ENCODE measurements at regions of chr1 and their contacts with region 1.

Region 1: DNA sequence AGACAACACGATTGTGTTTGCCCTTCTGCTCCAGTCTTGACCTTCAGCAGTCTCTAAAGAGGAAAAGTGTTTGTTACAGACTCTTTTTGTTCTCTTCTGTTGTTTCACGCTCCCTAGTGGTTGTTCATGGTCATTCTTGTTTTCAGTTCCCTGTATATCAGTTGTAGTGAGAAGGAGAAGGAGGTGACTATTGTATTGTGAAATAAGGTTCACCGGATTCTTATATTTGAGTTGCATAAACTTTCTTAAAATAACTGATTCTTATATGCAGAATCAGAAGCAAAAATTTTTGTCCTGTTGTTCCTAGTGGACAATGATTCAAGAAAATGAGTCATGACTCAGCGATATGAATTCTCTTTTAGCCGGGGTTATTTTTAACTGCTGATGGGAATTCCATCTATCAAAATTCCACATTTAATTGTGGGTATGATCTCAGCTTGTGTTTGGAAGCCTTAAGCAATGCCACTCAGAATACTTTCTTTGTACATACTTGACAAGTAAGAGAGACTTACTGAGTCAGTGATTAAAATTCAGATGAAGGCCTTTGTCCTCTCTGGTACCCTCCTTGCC is 152.2 kb downstream of the CLEC20A start:
- DNase-seq: no peak
- ATAC-seq: peak; percentile 74 to 76
- H3K4me3 ChIP-seq: peak overlapping the region in 2 of 4 donors; percentile 16 to 19
- H3K27ac ChIP-seq: peak overlapping the region; percentile 76 to 84 (median 82)
- H3K4me1 ChIP-seq: peaks cover 56 to 60% of the 10 kb centered on the region in 2 donors
- H3K27me3 ChIP-seq: no peaks in the 10 kb centered on the region
- CTCF ChIP-seq: peak; percentile 45 to 82 (median 57)
- POLR2A ChIP-seq: no peak

Region 2: DNA sequence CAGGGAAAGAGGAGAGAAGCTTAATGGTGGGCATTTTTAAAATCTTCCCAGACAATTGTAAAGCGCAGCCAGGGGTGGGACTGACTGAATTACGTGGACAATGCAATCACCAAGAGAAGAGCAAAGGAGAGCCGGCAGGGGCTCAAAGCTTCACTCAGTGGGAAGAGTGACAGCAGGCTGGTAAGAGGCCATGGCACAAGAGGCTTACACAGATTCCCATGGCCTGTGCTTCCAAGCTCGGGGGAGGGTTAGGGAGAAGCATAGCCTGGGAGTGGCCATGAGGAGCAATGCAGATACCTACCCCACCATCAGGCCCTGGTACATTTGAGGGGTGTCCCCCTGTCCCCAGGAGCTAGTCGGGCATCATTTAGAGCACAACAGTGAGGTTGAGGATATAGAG is 347.6 kb before region 1 on chr1:
- in situ Hi-C with region 1: no loop called
- intact Hi-C with region 1: no loop called
- DNase-seq: no peak
- ATAC-seq: peak in 1 of 2 donors; percentile 16
- H3K4me3 ChIP-seq: no peak overlapping the region
- H3K27ac ChIP-seq: peak overlapping the region; percentile 83 to 90 (median 86)
- H3K4me1 ChIP-seq: peaks cover 47 to 54% of the 10 kb centered on the region in 2 donors
- H3K27me3 ChIP-seq: no peaks in the 10 kb centered on the region
- CTCF ChIP-seq: no peak
- POLR2A ChIP-seq: no peak

Region 3: GRCh38 chr1:178161516-178161915 is 183.1 kb before region 1 on chr1:
- in situ Hi-C with region 1: no loop called
- intact Hi-C with region 1: no loop called
- DNase-seq: no peak
- ATAC-seq: no peak
- H3K4me3 ChIP-seq: no peak overlapping the region
- H3K27ac ChIP-seq: no peak overlapping the region
- H3K4me1 ChIP-seq: peaks cover 0 to 3% of the 10 kb centered on the region in 2 donors
- H3K27me3 ChIP-seq: no peaks in the 10 kb centered on the region
- CTCF ChIP-seq: no peak
- POLR2A ChIP-seq: no peak

Region 4: DNA sequence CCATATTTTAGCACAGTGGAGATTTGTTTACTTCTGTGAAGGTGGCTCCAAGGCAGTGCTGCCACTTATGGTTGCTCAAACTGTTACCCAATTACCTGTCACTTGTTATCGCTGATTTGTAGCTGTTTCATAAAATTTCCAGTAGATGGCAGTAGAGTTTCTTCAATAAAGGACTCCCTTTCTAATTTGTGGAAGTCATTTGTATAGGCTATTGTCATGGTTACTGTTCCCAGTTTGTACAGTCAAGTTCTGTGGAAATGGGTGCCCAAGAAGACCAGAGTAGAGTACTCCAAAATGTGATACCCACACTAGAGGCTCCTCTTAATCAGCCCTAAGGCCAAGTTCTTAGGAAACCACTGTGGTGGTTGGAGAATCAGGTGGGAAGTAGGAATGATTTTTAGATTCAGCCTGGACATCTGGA is 33.9 kb before region 1 on chr1:
- in situ Hi-C with region 1: no loop called
- intact Hi-C with region 1: loop called (anchors 2 kb)
- DNase-seq: peak in 1 of 2 donors; percentile 23
- ATAC-seq: peak; percentile 96
- H3K4me3 ChIP-seq: no peak overlapping the region
- H3K27ac ChIP-seq: no peak overlapping the region
- H3K4me1 ChIP-seq: peaks cover 12 to 14% of the 10 kb centered on the region in 2 donors
- H3K27me3 ChIP-seq: no peaks in the 10 kb centered on the region
- CTCF ChIP-seq: peak; percentile 78 to 84 (median 82)
- POLR2A ChIP-seq: no peak

Region 5: DNA sequence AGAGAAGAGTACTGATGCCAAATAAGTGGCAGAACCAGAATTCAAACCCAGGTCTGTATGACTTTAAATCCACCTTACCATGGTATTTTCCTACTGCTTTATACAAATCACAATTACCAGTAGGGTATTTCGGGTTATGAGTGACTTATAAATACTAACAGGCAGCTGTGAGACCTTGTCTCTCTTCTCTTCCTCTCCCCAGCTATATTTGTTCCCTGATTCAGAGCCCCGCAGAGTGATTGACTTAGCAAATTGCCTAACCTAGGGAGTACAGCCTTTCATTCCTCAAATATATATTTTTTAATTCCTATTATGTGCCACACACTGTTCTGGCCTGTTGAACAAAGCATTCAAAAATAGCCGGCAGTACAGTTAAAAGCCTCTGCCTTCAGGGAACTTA is 15.9 kb before region 1 on chr1:
- in situ Hi-C with region 1: no loop called
- intact Hi-C with region 1: loop called (anchors 2 kb)
- DNase-seq: peak in 1 of 2 donors; percentile 32
- ATAC-seq: peak; percentile 90 to 96
- H3K4me3 ChIP-seq: no peak overlapping the region
- H3K27ac ChIP-seq: peak overlapping the region; percentile 58 to 70 (median 66)
- H3K4me1 ChIP-seq: peaks cover 29 to 46% of the 10 kb centered on the region in 2 donors
- H3K27me3 ChIP-seq: no peaks in the 10 kb centered on the region
- CTCF ChIP-seq: no peak
- POLR2A ChIP-seq: no peak